ENCODE measurements at regions of chr12 and their contacts with region 1.

Region 1: DNA sequence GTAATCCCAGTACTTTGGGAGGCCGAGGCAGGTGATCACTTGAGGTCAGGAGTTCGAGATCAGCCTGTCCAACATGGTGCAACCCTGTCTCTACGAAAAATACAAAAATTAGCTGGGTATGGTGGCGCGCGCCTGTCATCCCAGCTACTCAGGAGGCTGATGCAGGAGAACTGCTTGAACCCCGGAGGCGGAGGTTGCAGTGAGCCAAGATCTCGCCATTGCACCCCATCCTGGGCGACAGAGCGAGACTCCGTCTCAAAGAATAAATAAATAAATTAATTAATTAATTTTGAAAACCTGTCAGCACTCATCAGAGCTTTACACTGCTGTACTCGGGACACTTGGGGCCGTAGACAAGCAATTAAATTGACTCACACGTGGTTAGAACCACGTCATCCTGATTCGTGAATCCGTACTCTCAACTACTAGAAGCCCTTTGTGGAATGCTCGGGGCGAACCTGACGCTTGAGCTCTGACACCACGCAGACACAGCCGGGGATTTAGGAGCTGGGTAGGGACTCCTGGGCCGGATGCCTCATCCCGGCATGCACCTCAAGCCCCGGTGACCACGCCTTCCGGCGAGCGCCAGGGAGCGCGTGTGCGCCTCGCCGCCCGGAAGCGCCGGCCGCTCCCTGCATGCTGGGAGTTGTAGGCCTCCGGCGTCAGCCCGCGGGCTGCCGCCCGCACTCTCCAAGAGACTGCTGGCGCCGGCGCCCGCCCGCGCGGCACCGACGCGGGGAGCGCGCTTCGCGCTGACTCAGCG is at the start of gene XPOT:
- DNase-seq: peak; percentile 95
- H3K4me3 Mint-ChIP-seq: peak within 1 kb of the TSS; percentile 98
- H3K27ac Mint-ChIP-seq: peak within 1 kb of the TSS; percentile 97
- H3K4me1 Mint-ChIP-seq: peaks cover 56% of the 10 kb centered on the region
- H3K27me3 Mint-ChIP-seq: no peaks in the 10 kb centered on the region
- total RNA-seq, gene XPOT: 119 to 122 TPM

Region 2: GRCh38 chr12:64222009-64222765 is 181.7 kb before region 1 on chr12 and contains the start of gene KICS2:
- CTCF ChIA-PET with region 1: no interaction called
- POLR2A ChIA-PET with region 1: interaction called, 11 read pairs
- DNase-seq: peak; percentile 92
- H3K4me3 Mint-ChIP-seq: peak within 1 kb of the TSS; percentile 91
- H3K27ac Mint-ChIP-seq: peak within 1 kb of the TSS; percentile 87
- H3K4me1 Mint-ChIP-seq: peaks cover 30% of the 10 kb centered on the region
- H3K27me3 Mint-ChIP-seq: peaks cover 8% of the 10 kb centered on the region
- total RNA-seq, gene KICS2: 9.6 to 10.3 TPM

Region 3: GRCh38 chr12:64390275-64390851 is 13.5 kb before region 1 on chr12 and contains the start of gene C12orf56:
- CTCF ChIA-PET with region 1: interaction called, 4 read pairs
- POLR2A ChIA-PET with region 1: interaction called, 10 read pairs
- DNase-seq: peak; percentile 40
- H3K4me3 Mint-ChIP-seq: peak within 1 kb of the TSS; percentile 66
- H3K27ac Mint-ChIP-seq: no peak within 1 kb of the TSS
- H3K4me1 Mint-ChIP-seq: peaks cover 24% of the 10 kb centered on the region
- H3K27me3 Mint-ChIP-seq: peaks cover 21% of the 10 kb centered on the region
- total RNA-seq, gene C12orf56: 0.40 TPM in 1 of 2 experiments, not detected in the other

Region 4: DNA sequence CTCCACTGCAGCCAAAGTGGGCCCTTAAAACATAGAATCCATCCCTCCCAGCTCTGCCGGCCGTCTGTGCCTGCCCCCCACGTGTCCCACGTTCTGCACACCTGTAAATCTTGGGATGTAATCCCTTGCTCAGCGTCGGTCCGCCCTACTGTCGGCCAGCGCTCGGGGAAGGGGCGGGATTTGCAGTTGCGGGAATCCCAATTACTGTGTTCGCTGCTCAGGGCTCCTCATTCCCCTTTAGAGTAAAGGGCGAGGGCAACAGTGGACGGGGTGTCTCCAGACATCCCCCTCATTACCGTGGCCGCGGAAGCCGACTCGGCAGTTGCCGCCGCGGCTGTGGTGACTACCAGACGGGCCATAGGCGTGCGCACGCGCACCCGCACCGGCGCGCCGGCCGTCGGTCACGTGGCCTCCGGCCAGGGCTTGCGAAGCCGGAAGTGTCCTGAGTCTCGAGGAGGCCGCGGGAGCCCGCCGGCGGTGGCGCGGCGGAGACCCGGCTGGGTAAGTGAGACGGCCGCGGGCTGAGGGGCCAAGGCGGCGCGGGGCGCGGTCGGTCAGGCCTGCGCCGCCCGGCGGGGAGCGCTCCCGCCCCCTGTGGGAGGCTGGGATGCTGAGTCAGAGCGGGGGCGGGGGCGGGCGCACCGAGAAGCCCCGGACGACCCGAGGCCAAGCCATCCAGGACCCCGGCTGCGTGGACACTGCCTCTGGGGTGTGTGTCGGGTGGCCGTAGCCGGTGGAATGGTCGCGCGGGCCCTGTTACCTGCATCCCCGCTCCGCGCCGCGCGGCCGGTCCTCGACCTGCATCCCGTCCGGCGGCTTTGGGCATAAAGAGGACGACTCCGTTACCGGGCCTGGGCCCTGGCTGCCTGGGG is 48.0 kb after region 1 on chr12 and contains the start of gene TBK1:
- CTCF ChIA-PET with region 1: no interaction called
- POLR2A ChIA-PET with region 1: interaction called, 10 read pairs
- DNase-seq: peak; percentile 75
- H3K4me3 Mint-ChIP-seq: peak within 1 kb of the TSS; percentile 87
- H3K27ac Mint-ChIP-seq: peak within 1 kb of the TSS; percentile 86
- H3K4me1 Mint-ChIP-seq: peaks cover 41% of the 10 kb centered on the region
- H3K27me3 Mint-ChIP-seq: no peaks in the 10 kb centered on the region
- total RNA-seq, gene TBK1: 34.1 to 36.0 TPM